ENCODE measurements at regions of chr12 and their contacts with region 1.

Region 1: DNA sequence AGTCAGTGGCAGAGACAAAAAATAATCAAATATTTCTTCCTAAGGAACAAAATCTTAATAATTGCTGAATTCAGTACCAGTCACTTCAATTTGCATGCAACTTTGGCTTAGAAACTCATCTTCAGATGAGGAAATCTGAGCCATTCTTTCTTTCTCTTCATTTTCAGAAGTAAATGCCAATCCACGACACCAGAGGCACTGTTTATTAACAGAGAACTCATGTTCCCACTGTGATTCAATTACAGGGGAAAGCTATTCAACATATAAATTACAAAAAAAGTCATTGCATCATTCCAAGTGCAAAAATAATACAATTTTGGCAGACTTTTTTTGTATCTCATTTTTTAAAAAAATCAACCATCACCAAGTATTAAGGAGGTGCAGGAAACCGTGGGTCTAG is 816.1 kb upstream of the TMEM132C start:
- DNase-seq: no peak
- H3K4me3 ChIP-seq: no peak overlapping the region
- H3K27ac ChIP-seq: no peak overlapping the region
- H3K4me1 ChIP-seq: no peaks in the 10 kb centered on the region
- H3K27me3 ChIP-seq: peaks cover 19% of the 10 kb centered on the region
- CTCF ChIP-seq: 0 out of 2 replicates have a peak, but pooled peaks have one; percentile 24

Region 2: DNA sequence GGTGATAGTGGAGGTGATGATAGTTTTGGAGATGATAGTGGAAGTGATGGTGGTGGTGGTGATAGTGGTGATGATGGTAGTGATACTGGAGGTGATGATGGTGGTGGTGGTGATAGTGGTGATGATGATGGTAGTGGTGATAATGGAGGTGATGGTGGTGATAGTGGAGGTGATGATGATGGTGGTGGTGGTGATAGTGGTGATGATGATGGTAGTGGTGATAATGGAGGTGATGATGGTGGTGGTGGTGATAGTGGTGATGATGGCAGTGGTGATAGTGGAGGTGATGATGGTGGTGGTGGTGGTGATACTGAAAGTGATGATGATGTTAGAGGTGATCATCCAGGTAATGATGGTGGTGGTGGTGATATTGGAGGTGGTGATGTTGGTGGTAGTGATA is 246.1 kb after region 1 on chr12:
- CTCF ChIA-PET with region 1: interaction called, 10 read pairs
- POLR2A ChIA-PET with region 1: no interaction called
- intact Hi-C with region 1: no loop called
- DNase-seq: no peak
- H3K4me3 ChIP-seq: no peak overlapping the region
- H3K27ac ChIP-seq: no peak overlapping the region
- H3K4me1 ChIP-seq: no peaks in the 10 kb centered on the region
- H3K27me3 ChIP-seq: peaks cover 6% of the 10 kb centered on the region
- CTCF ChIP-seq: no peak

Measured in A673 (cell line).